RWPE1 (cell line): ENCODE measurements at regions of chr7 and their contacts with region 1.

Region 1: GRCh38 chr7:104883718-104884452 is 130.1 kb upstream of the KMT2E start:
- DNase-seq: peak; percentile 80
- H3K27ac ChIP-seq: no peak overlapping the region
- CTCF ChIP-seq: peak; percentile 91

Region 2: GRCh38 chr7:104552102-104552501 is 331.8 kb before region 1 on chr7:
- CTCF ChIA-PET with region 1: no interaction called
- POLR2A ChIA-PET with region 1: no interaction called
- DNase-seq: peak; percentile 55
- H3K27ac ChIP-seq: no peak overlapping the region
- CTCF ChIP-seq: no peak

Region 3: DNA sequence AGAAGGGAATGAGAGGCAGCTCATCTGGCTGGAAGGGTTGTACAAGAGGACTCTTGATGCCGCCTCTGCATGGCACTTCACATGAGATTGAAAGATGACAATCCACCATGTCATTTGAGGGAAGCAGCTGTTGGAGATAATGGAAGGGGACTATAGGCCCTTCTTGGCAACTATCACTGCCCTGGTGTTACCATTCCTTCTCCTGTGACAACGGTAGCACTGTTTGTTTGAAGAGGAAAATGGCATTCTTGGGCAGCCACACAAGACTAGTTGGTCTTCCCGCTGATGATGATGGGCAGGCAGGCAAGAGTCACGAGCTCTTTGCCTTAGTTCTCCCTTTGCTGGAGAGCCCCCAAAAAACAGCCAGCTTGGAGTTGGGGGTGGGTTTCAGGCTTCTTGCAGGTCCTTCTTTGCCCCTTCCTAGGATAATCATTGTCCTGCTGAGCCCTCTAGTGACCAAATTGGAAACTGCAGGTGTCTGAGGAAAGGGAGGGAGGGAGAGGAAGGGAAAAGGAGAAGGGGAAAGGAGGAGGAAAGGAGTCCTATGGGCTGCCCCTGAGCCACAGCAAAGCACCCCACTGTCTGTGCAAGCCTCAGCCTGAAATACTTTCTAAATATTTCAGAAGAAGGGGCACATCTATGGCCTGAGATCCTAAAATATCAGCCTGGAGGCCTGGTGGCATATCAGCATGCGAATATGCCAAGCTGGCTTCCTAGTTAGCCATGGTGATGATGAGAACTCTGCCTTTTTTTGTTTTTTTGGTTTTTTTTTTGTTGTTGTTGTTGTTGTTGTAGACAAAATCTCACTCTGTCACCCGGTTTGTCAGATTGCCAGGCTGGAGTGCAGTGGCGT is 35.5 kb before region 1 on chr7:
- CTCF ChIA-PET with region 1: no interaction called
- POLR2A ChIA-PET with region 1: no interaction called
- DNase-seq: peak; percentile 63
- H3K27ac ChIP-seq: no peak overlapping the region
- CTCF ChIP-seq: peak; percentile 96

Region 4: GRCh38 chr7:104908636-104909035 is 24.8 kb after region 1 on chr7:
- CTCF ChIA-PET with region 1: no interaction called
- POLR2A ChIA-PET with region 1: no interaction called
- DNase-seq: no peak
- H3K27ac ChIP-seq: no peak overlapping the region
- CTCF ChIP-seq: no peak

Region 5: DNA sequence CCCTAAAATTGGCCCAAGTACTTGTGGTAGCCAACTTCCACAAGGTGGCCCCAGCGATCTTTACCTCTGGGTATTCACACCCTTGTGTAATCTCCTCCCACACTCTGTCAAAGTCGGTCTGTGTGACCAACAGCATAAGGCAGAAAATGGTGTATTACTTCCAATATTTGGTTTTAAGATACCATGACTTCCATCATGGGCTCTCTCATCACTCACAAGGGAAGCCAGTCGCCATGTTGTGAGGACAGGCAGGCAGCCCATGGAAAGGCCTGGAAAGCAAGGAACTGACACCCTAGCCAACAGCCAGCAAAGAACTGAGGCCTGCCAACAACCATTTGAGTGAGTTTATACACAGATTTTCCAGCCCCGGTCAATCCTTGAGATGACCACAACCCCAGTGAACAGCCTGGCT is 39.1 kb after region 1 on chr7:
- CTCF ChIA-PET with region 1: interaction called, 14 read pairs
- POLR2A ChIA-PET with region 1: no interaction called
- DNase-seq: peak; percentile 73
- H3K27ac ChIP-seq: peak overlapping the region; percentile 25; the same call in 1 of the 2 replicates
- CTCF ChIP-seq: peak; percentile 91